Common myeloid progenitor, CD34-positive (primary cell): ENCODE measurements at regions of chr12 and their contacts with region 1.

Region 1: DNA sequence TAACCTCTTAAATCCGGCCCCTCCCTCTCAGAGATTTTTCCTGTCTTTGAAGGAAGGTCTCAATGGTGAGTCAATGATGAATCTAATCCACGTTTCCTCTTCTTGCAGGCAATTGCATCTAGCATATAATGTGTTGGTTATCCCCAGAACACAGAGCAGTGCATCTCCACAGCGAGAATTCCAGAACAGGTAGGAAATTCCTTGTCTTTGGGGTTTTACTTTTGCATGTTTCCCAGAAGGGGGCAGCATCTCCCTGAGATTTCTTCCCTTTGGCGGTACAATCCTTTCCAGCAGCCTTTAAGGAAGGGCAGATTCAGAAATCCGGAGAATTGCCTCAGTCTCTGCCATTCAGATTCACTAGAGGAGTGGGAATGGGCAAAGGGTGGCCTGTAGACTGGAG is 128.0 kb downstream of the KCNA5 start:
- DNase-seq: peak; percentile 25 to 52 (median 42)
- H3K4me3 ChIP-seq: no peak overlapping the region
- H3K27ac ChIP-seq: no peak overlapping the region
- H3K4me1 ChIP-seq: no peaks in the 10 kb centered on the region
- H3K27me3 ChIP-seq: peaks cover 0 to 4% (median 0%) of the 10 kb centered on the region in 5 experiments

Region 2: DNA sequence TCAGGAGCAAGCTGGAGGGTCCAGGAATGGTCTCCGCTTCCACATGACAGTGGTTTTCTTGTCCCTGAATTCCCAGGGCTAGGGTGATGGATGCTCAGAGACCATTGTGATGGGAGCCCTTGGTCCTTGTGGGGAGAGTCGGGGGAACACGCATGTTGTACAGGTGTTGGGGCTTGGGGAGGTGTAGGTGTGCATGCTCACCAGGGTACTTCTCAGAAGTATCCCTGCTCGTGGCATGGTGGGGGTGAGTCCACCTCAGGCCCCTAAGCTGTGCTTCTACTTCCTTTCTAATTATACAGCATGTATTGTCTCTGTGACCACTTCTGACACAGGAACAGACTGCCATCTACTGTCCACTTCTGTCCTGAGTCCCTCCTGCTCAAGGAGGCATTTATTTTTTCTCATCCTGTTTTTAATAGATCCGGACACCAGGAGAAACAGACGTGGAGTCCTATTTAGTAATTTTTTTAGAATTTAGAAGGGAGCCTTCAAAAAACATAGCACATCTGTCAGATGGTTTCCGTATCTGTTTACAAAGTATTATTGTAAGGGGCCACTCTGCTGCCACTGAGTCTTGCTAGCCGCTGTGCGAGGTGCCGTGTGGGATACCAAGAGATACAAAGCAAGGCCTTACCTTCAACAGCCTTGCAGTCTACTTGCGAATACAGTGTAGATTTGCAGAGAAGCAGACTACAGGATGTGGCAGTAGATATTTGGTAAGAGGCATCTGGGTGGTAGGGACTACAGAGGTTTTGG is 270.7 kb after region 1 on chr12:
- CTCF ChIA-PET with region 1: interaction called, 27 read pairs
- POLR2A ChIA-PET with region 1: no interaction called
- DNase-seq: peak; percentile 43 to 70 (median 65)
- H3K4me3 ChIP-seq: no peak overlapping the region
- H3K27ac ChIP-seq: no peak overlapping the region
- H3K4me1 ChIP-seq: peaks cover 0 to 5% (median 1%) of the 10 kb centered on the region in 4 experiments
- H3K27me3 ChIP-seq: peaks cover 0 to 23% (median 8%) of the 10 kb centered on the region in 5 experiments